PC-3 (cell line): ENCODE measurements at regions of chr3 and their contacts with region 1.

Region 1: DNA sequence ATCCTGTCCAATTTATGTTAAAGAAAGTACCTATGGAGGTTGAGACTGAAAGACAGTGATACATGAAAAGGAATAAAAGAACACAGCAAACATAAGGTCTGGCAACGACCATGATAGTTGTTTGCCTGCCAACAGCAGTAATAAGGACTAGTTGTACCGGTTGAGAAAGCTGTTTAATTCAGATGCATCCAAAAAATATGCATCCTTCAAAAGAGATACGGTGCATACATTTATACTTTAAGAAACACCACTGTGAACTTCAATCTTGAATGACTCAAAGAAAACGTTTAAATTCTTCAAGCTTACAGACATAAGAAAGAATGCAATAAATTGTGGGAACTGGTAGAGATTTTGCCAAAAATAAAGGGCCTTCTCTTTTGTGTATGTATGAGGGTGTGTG is 492.1 kb downstream of the NLGN1 start:
- DNase-seq: peak; percentile 50
- ATAC-seq: peak; percentile 19
- H3K4me3 ChIP-seq: no peak overlapping the region
- H3K27ac ChIP-seq: 0 out of 2 replicates have a peak overlapping the region, but pooled peaks have one; percentile 14
- H3K4me1 ChIP-seq: peaks cover 42% of the 10 kb centered on the region
- H3K27me3 ChIP-seq: no peaks in the 10 kb centered on the region
- CTCF ChIP-seq: no peak

Region 2: GRCh38 chr3:173584093-173584837 is 305.3 kb before region 1 on chr3:
- CTCF ChIA-PET with region 1: interaction called, 5 read pairs
- POLR2A ChIA-PET with region 1: no interaction called
- intact Hi-C with region 1: loop called (anchors 10 kb)
- DNase-seq: peak; percentile 60
- ATAC-seq: no peak; the same call in 1 of the 2 replicates
- H3K4me3 ChIP-seq: peak overlapping the region; percentile 65
- H3K27ac ChIP-seq: no peak overlapping the region
- H3K4me1 ChIP-seq: no peaks in the 10 kb centered on the region
- H3K27me3 ChIP-seq: peaks cover 34% of the 10 kb centered on the region
- CTCF ChIP-seq: peak; percentile 67

Region 3: GRCh38 chr3:174062923-174063322 is 173.3 kb after region 1 on chr3:
- CTCF ChIA-PET with region 1: no interaction called
- POLR2A ChIA-PET with region 1: no interaction called
- intact Hi-C with region 1: no loop called
- DNase-seq: no peak
- ATAC-seq: no peak
- H3K4me3 ChIP-seq: no peak overlapping the region
- H3K27ac ChIP-seq: no peak overlapping the region
- H3K4me1 ChIP-seq: no peaks in the 10 kb centered on the region
- H3K27me3 ChIP-seq: no peaks in the 10 kb centered on the region
- CTCF ChIP-seq: no peak